PC-3 (cell line): ENCODE measurements at regions of chr2 and their contacts with region 1.

Region 1: GRCh38 chr2:204205538-204205937 is 269.0 kb downstream of the ICOS start:
- DNase-seq: no peak
- ATAC-seq: no peak
- H3K4me3 ChIP-seq: no peak overlapping the region
- H3K27ac ChIP-seq: no peak overlapping the region
- H3K4me1 ChIP-seq: no peaks in the 10 kb centered on the region
- H3K27me3 ChIP-seq: peaks cover 40% of the 10 kb centered on the region
- CTCF ChIP-seq: no peak

Region 2: GRCh38 chr2:204187229-204188083 is 18.1 kb before region 1 on chr2:
- CTCF ChIA-PET with region 1: no interaction called
- POLR2A ChIA-PET with region 1: interaction called, 12 read pairs
- intact Hi-C with region 1: no loop called
- DNase-seq: no peak
- ATAC-seq: no peak
- H3K4me3 ChIP-seq: no peak overlapping the region
- H3K27ac ChIP-seq: no peak overlapping the region
- H3K4me1 ChIP-seq: peaks cover 10% of the 10 kb centered on the region
- H3K27me3 ChIP-seq: peaks cover 36% of the 10 kb centered on the region
- CTCF ChIP-seq: no peak